Naive thymus-derived CD8-positive, alpha-beta T cell (primary cell): ENCODE measurements at regions of chr11 and their contacts with region 1.

Region 1: DNA sequence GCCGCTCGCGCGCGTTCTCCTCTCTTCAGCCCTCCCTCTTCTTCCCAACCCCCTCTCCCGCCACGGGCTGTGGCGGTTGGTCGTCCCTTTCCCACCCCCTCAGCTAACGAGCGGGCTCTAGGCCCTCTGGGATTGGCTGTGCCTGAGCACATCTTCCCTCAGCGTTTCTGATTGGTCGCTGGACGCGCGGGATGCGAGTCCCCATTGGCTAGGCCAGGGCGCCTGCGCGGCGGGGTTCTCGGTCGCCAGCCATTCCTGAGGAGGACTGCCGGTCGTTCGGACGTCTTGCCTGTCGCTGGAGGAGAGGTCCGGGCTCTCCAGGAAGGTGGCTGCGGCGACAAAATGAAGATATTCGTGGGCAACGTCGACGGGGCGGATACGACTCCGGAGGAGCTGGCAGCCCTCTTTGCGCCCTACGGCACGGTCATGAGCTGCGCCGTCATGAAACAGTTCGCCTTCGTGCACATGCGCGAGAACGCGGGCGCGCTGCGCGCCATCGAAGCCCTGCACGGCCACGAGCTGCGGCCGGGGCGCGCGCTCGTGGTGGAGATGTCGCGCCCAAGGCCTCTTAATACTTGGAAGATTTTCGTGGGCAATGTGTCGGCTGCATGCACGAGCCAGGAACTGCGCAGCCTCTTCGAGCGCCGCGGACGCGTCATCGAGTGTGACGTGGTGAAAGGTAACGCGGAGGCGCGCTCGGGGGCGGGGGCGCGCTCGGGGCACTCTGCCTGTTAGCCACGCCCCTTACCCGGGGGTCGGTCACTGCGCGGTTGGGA is at the start of gene RBM14:
- DNase-seq: peak; percentile 97 to 100 (median 98)
- ATAC-seq: peak; percentile 80 to 81
- H3K4me3 Mint-ChIP-seq: peak within 1 kb of the TSS; percentile 96 to 100 (median 98)
- H3K27ac Mint-ChIP-seq: peak within 1 kb of the TSS; percentile 96 to 100 (median 99)
- H3K4me1 Mint-ChIP-seq: peaks cover 24 to 56% (median 49%) of the 10 kb centered on the region in 4 donors
- H3K27me3 Mint-ChIP-seq: peaks cover 0 to 5% (median 0%) of the 10 kb centered on the region in 5 donors
- polyA plus RNA-seq, gene RBM14: 70.2 to 91.8 (median 83.3) TPM

Region 2: GRCh38 chr11:66288671-66289547 is 327.7 kb before region 1 on chr11 and contains the start of gene YIF1A:
- POLR2A ChIA-PET with region 1: no interaction called
- DNase-seq: peak; percentile 94 to 99 (median 98)
- ATAC-seq: peak; percentile 90 to 94
- H3K4me3 Mint-ChIP-seq: peak within 1 kb of the TSS; percentile 84 to 96 (median 92)
- H3K27ac Mint-ChIP-seq: peak within 1 kb of the TSS; percentile 88 to 97 (median 94)
- H3K4me1 Mint-ChIP-seq: peaks cover 19 to 51% (median 45%) of the 10 kb centered on the region in 4 donors
- H3K27me3 Mint-ChIP-seq: peaks cover 2 to 20% (median 13%) of the 10 kb centered on the region in 5 donors
- polyA plus RNA-seq, gene YIF1A: 49.1 to 59.9 (median 53.9) TPM

Region 3: DNA sequence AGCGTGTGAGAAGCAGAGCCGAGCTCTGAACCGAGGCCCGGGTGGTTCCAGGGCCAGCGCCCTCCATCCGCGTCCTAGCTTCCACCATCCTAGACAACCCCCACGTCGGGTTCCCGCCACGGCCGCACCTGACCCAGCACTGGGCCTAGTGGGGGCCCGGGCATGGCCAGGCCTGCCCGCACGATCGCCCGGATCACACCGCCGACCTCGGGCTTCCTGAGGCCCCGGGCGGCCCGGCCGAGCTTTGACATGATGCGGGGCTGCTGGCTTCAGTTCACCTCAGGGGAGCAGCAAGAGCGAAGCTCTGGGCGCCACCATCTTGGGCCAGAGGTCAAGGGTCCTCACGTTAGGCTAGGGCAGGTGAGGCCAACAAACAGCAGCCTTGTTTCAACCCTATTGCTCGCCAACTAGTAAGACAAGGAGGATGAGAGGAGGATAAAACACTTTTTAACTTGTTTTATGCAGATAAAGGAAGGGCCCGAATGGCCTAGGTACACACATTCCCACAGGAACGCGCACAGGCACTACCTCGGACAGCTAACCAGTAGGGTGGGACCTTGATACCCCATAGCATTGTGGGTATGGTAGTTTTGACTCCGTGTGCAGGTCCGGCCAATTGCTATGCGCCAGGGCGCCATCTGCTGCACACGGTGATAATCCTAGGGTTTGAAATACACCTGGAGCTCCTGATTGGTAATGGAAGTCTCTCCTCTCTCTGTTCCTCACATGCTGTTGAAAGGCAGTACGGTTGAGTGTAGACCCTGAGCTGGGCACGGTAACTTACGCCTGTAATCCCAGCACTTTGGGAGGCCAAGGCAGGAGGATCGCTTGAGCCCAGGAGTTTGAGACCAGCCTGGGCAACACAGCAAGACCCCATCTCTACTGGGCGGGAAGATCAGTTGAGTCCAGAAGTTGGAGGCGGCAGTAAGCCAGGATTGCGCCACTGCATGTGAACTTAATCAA is 177.8 kb before region 1 on chr11 and contains the start of gene MRPL11:
- POLR2A ChIA-PET with region 1: interaction called, 12 read pairs
- DNase-seq: peak; percentile 74 to 95 (median 88)
- ATAC-seq: peak; percentile 96 to 98
- H3K4me3 Mint-ChIP-seq: peak within 1 kb of the TSS; percentile 87 to 96 (median 92)
- H3K27ac Mint-ChIP-seq: peak within 1 kb of the TSS; percentile 24 to 99 (median 98)
- H3K4me1 Mint-ChIP-seq: peaks cover 5 to 16% (median 9%) of the 10 kb centered on the region in 4 donors
- H3K27me3 Mint-ChIP-seq: peaks cover 0 to 6% (median 0%) of the 10 kb centered on the region in 5 donors
- polyA plus RNA-seq, gene MRPL11: 86.9 to 98.2 (median 87.9) TPM

Region 4: GRCh38 chr11:66568124-66568916 is 48.2 kb before region 1 on chr11 and contains the start of gene CTSF:
- POLR2A ChIA-PET with region 1: interaction called, 18 read pairs
- DNase-seq: peak; percentile 50 to 89 (median 68)
- ATAC-seq: peak; percentile 94 to 99
- H3K4me3 Mint-ChIP-seq: peak within 1 kb of the TSS; percentile 75 to 89 (median 86)
- H3K27ac Mint-ChIP-seq: peak within 1 kb of the TSS in 9 of 10 donors; percentile 66 to 95 (median 87)
- H3K4me1 Mint-ChIP-seq: peaks cover 0 to 18% (median 10%) of the 10 kb centered on the region in 4 donors
- H3K27me3 Mint-ChIP-seq: peaks cover 0 to 2% (median 0%) of the 10 kb centered on the region in 5 donors
- polyA plus RNA-seq, gene CTSF: 25.1 to 40.9 (median 25.4) TPM

Region 5: GRCh38 chr11:66631883-66632282 is 15.3 kb after region 1 on chr11:
- POLR2A ChIA-PET with region 1: interaction called, 198 read pairs
- DNase-seq: no peak
- ATAC-seq: no peak
- H3K4me3 Mint-ChIP-seq: no peak overlapping the region
- H3K27ac Mint-ChIP-seq: peak overlapping the region in 5 of 10 donors; percentile 6 to 74 (median 47)
- H3K4me1 Mint-ChIP-seq: peaks cover 25 to 60% (median 58%) of the 10 kb centered on the region in 4 donors
- H3K27me3 Mint-ChIP-seq: no peaks in the 10 kb centered on the region

Region 6: DNA sequence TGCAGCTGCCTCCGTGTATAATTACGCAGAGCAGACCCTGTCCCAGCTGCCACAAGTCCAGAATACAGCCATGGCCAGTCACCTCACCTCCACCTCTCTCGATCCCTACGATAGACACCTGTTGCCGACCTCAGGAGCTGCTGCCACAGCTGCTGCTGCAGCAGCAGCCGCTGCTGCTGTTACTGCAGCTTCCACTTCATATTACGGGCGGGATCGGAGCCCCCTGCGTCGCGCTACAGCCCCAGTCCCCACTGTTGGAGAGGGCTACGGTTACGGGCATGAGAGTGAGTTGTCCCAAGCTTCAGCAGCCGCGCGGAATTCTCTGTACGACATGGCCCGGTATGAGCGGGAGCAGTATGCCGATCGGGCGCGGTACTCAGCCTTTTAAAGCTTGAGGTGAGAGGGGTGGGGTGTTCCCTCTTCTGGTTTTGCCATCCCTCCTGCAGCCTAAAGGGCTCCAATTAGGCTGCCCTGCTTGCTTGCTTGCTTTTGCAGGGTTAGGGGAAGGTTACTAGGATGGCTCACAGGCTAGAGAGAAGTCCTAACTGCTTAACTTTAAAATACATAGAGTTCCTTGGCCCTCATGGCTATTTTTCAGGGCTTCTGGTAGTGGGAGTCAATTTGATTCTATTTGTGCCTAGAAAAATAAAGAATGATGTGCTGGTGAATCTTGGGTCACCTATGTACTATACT is 27.3 kb after region 1 on chr11:
- POLR2A ChIA-PET with region 1: interaction called, 198 read pairs
- DNase-seq: no peak
- ATAC-seq: no peak
- H3K4me3 Mint-ChIP-seq: peak overlapping the region; percentile 89 to 99 (median 95)
- H3K27ac Mint-ChIP-seq: peak overlapping the region; percentile 7 to 89 (median 71)
- H3K4me1 Mint-ChIP-seq: peaks cover 61 to 93% (median 90%) of the 10 kb centered on the region in 4 donors
- H3K27me3 Mint-ChIP-seq: no peaks in the 10 kb centered on the region